ENCODE measurements at regions of chr9 and their contacts with region 1.

Region 1: DNA sequence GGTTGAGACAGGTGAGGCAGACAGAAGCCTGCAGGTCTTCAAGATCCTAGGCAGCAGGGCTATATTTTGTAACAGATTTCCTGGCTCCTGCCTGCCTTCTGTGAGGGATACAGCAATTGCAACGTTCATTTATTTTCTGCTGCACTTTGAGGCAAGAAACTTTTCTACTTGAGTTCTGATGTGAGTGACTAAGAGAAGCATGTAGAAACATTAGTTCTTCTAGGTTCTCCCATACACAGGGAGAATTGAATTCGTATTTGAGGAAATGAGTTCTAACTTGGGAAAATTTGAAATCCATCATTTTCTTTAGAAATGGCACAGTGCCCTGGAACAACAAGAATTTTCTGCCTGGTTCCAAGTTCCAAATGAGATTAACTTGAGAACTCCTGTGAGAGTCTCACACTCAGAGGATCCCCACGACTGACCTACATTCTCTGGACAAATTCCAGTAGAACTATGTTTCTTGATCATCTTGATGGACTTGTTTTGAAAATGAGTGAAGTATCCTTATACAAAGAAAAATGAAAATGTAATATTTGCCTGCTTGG is 15.0 kb downstream of the MAMDC2 start:
- DNase-seq: no peak
- H3K4me3 ChIP-seq: no peak overlapping the region
- H3K27ac ChIP-seq: peak overlapping the region in 1 of 2 donors; percentile 6
- H3K4me1 ChIP-seq: peaks cover 7% of the 10 kb centered on the region
- H3K27me3 ChIP-seq: no peaks in the 10 kb centered on the region
- CTCF ChIP-seq: no peak
- EP300 ChIP-seq: no peak
- POLR2A ChIP-seq: no peak

Region 2: GRCh38 chr9:70080481-70081119 is 22.0 kb after region 1 on chr9:
- intact Hi-C with region 1: loop called in 1 of 4 experiments (anchors 1 kb)
- DNase-seq: peak in 3 of 5 donors; percentile 26 to 64 (median 36)
- H3K4me3 ChIP-seq: no peak overlapping the region
- H3K27ac ChIP-seq: peak overlapping the region; percentile 1
- H3K4me1 ChIP-seq: peaks cover 32% of the 10 kb centered on the region
- H3K27me3 ChIP-seq: no peaks in the 10 kb centered on the region
- CTCF ChIP-seq: no peak
- EP300 ChIP-seq: no peak
- POLR2A ChIP-seq: no peak